ENCODE measurements at regions of chr7 and their contacts with region 1.

Region 1: DNA sequence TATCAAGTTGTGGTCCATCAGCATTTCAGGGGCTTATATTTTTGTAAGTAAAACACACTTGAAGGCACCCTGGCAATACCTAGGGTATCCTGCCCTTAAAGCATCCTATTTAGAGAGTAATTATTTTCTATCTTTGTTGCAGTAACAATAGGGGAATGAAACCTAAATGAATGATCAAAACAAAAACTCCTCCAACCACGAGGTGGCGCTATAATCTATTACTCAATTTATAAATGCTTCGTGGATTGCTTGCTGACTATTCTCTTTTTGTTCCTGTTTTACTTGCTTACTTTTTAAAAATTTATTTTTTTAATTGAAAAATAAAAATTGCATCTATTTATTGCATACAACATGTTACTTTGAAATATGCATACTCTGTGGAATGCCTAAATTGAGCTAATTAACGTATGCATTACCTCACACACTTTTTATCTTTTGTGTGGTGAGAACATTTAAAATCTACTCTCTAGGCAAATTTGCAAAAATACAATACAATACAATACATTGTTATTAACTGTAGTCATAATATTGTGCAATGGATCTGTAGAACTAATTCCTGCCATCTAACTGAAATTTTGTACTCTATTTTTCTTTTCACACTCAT is 147.7 kb upstream of the BMPER start:
- DNase-seq: no peak
- ATAC-seq: no peak

Region 2: GRCh38 chr7:33895025-33895804 is 137.6 kb after region 1 on chr7:
- intact Hi-C with region 1: loop called (anchors 5 kb)
- DNase-seq: peak; percentile 86
- ATAC-seq: peak; percentile 92 to 95

Measured in left cardiac atrium (tissue), 4 donors.